CD4-positive, alpha-beta memory T cell (primary cell): ENCODE measurements at regions of chr17 and their contacts with region 1.

Region 1: DNA sequence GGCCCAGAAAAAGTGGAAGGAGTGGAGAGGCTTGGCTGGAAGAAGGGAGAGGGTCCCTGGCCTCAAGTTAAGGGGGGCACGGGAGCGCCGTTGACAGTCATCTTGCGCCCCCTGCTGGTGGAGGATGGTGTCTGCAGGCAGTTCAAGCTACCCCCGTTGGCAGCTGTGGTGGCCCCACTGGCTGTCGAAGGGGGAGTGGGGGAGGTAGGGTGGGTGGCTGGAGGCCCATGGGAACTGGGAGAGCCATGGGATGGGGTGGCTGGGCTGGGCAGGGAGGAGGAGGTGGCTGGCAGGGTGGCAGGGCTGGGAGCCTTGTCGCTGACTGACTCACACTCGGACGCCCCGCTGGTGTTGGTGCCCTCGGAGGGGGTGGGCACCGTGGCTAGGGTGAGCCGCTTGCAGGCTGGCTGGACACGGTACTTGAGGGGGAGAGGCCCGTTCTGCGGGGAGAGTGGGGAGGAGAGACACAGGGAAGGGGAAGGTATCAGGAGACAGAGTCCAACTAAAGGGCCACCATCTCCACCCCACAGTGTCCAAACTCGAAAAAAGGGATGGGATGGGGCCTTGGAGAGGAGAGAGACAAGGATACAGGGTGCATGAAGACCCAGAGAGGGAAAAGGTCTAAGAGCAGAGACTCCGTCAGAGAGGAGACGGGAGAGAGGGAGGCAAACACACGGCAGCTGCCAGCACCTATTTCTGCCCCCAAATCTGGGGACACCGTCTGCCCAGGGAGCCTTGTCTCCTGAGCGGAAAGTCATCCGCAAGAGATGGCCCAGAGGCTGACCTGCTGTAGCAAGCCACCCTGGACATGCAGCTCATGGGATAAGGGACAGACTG is 5.2 kb downstream of the CISD3 start:
- DNase-seq: peak; percentile 57 to 66 (median 61)
- H3K4me3 ChIP-seq: no peak overlapping the region
- H3K4me3 Mint-ChIP-seq: no peak overlapping the region
- H3K27ac ChIP-seq: no peak overlapping the region
- H3K27ac Mint-ChIP-seq: peak overlapping the region in 2 of 7 donors; percentile 41 to 64
- H3K4me1 ChIP-seq: peaks cover 40% of the 10 kb centered on the region
- H3K4me1 Mint-ChIP-seq: peaks cover 19 to 51% (median 41%) of the 10 kb centered on the region in 4 donors
- H3K27me3 ChIP-seq: no peaks in the 10 kb centered on the region
- H3K27me3 Mint-ChIP-seq: peaks cover 0 to 2% of the 10 kb centered on the region in 2 donors

Region 2: DNA sequence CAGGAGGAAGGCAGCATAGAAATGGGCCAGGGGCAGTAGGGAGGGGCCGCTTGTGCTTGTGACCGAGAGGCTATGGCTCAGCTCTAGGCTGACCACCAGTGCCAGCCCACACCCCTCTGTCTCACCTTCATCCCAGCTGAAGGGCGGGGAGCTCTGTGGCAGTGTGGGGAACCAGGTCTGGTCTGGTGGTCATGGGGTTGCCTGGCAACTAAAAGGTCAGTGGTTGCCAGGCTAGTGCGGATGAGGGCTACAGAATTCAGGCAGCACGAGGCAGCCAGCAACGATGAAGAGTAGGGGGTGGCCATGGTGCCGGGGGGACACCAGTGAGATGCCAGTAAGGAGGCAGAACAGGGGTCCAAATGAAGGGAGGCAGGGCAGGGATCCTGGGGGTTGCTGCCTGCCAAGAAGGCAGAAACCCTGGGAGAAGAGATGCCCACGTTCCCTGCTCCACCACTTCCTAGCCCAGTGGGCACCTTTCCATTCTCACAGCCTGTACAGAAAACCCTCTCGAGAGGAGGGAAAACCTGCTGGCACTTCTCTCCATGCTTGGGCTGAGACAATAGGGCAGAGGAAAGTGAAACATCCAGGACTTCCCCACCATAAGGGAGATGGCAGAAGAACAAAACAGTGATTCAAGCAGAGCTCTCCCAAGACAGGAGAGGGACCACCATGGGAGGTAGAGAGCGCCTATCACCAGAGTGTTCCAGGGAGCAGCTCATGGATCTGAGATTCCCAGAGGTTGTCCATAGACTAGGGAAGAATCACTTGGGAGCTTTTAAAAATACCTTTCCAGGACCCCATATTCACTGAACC is 169.3 kb before region 1 on chr17:
- CTCF ChIA-PET with region 1: no interaction called
- POLR2A ChIA-PET with region 1: no interaction called
- intact Hi-C with region 1: no loop called
- DNase-seq: peak in 1 of 5 donors; percentile 15
- H3K4me3 ChIP-seq: no peak overlapping the region
- H3K4me3 Mint-ChIP-seq: no peak overlapping the region
- H3K27ac ChIP-seq: no peak overlapping the region
- H3K27ac Mint-ChIP-seq: no peak overlapping the region
- H3K4me1 ChIP-seq: peaks cover 18% of the 10 kb centered on the region
- H3K4me1 Mint-ChIP-seq: peaks cover 0 to 23% (median 11%) of the 10 kb centered on the region in 4 donors
- H3K27me3 ChIP-seq: peaks cover 68% of the 10 kb centered on the region
- H3K27me3 Mint-ChIP-seq: peaks cover 65 to 67% of the 10 kb centered on the region in 2 donors

Region 3: GRCh38 chr17:38667099-38667786 is 68.1 kb before region 1 on chr17:
- CTCF ChIA-PET with region 1: interaction called, 21 read pairs
- POLR2A ChIA-PET with region 1: interaction called, 4 read pairs
- intact Hi-C with region 1: no loop called
- DNase-seq: peak; percentile 43 to 57 (median 51)
- H3K4me3 ChIP-seq: no peak overlapping the region
- H3K4me3 Mint-ChIP-seq: no peak overlapping the region
- H3K27ac ChIP-seq: no peak overlapping the region
- H3K27ac Mint-ChIP-seq: no peak overlapping the region
- H3K4me1 ChIP-seq: no peaks in the 10 kb centered on the region
- H3K4me1 Mint-ChIP-seq: peaks cover 0 to 8% (median 1%) of the 10 kb centered on the region in 4 donors
- H3K27me3 ChIP-seq: peaks cover 20% of the 10 kb centered on the region
- H3K27me3 Mint-ChIP-seq: peaks cover 41 to 50% of the 10 kb centered on the region in 2 donors

Region 4: GRCh38 chr17:38690386-38690785 is 45.0 kb before region 1 on chr17:
- CTCF ChIA-PET with region 1: interaction called, 13 read pairs
- POLR2A ChIA-PET with region 1: no interaction called
- intact Hi-C with region 1: no loop called
- DNase-seq: no peak
- H3K4me3 ChIP-seq: no peak overlapping the region
- H3K4me3 Mint-ChIP-seq: no peak overlapping the region
- H3K27ac ChIP-seq: no peak overlapping the region
- H3K27ac Mint-ChIP-seq: no peak overlapping the region
- H3K4me1 ChIP-seq: no peaks in the 10 kb centered on the region
- H3K4me1 Mint-ChIP-seq: peaks cover 0 to 1% (median 0%) of the 10 kb centered on the region in 4 donors
- H3K27me3 ChIP-seq: no peaks in the 10 kb centered on the region
- H3K27me3 Mint-ChIP-seq: peaks cover 3 to 4% of the 10 kb centered on the region in 2 donors

Region 5: GRCh38 chr17:38724337-38724988 is 10.9 kb before region 1 on chr17:
- CTCF ChIA-PET with region 1: interaction called, 18 read pairs
- POLR2A ChIA-PET with region 1: interaction called, 3 read pairs
- intact Hi-C with region 1: no loop called
- DNase-seq: no peak
- H3K4me3 ChIP-seq: no peak overlapping the region
- H3K4me3 Mint-ChIP-seq: peak overlapping the region in 3 of 8 donors; percentile 17 to 53 (median 20)
- H3K27ac ChIP-seq: no peak overlapping the region
- H3K27ac Mint-ChIP-seq: peak overlapping the region in 5 of 7 donors; percentile 6 to 95 (median 69)
- H3K4me1 ChIP-seq: peaks cover 68% of the 10 kb centered on the region
- H3K4me1 Mint-ChIP-seq: peaks cover 28 to 71% (median 49%) of the 10 kb centered on the region in 4 donors
- H3K27me3 ChIP-seq: no peaks in the 10 kb centered on the region
- H3K27me3 Mint-ChIP-seq: no peaks in the 10 kb centered on the region

Region 6: GRCh38 chr17:38766341-38766740 is 31.0 kb after region 1 on chr17:
- CTCF ChIA-PET with region 1: interaction called, 10 read pairs
- POLR2A ChIA-PET with region 1: interaction called, 4 read pairs
- intact Hi-C with region 1: no loop called
- DNase-seq: no peak
- H3K4me3 ChIP-seq: no peak overlapping the region
- H3K4me3 Mint-ChIP-seq: no peak overlapping the region
- H3K27ac ChIP-seq: no peak overlapping the region
- H3K27ac Mint-ChIP-seq: peak overlapping the region in 3 of 7 donors; percentile 57 to 80 (median 62)
- H3K4me1 ChIP-seq: peaks cover 2% of the 10 kb centered on the region
- H3K4me1 Mint-ChIP-seq: peaks cover 3 to 6% (median 4%) of the 10 kb centered on the region in 4 donors
- H3K27me3 ChIP-seq: no peaks in the 10 kb centered on the region
- H3K27me3 Mint-ChIP-seq: no peaks in the 10 kb centered on the region